Spleen (tissue), 13 donors: ENCODE measurements at regions of chr9 and their contacts with region 1.

Region 1: GRCh38 chr9:134443168-134444037 is 117.1 kb downstream of the RXRA start:
- DNase-seq: peak; percentile 97
- H3K4me3 ChIP-seq: peak overlapping the region in 1 of 8 donors; percentile 22
- H3K27ac ChIP-seq: peak overlapping the region in 6 of 8 donors; percentile 41 to 87 (median 78)
- H3K4me1 ChIP-seq: peaks cover 22 to 51% (median 35%) of the 10 kb centered on the region in 6 donors
- H3K27me3 ChIP-seq: peaks cover 0 to 31% (median 15%) of the 10 kb centered on the region in 7 donors
- CTCF ChIP-seq: peak; percentile 97 to 100 (median 99)
- POLR2A ChIP-seq: no peak

Region 2: DNA sequence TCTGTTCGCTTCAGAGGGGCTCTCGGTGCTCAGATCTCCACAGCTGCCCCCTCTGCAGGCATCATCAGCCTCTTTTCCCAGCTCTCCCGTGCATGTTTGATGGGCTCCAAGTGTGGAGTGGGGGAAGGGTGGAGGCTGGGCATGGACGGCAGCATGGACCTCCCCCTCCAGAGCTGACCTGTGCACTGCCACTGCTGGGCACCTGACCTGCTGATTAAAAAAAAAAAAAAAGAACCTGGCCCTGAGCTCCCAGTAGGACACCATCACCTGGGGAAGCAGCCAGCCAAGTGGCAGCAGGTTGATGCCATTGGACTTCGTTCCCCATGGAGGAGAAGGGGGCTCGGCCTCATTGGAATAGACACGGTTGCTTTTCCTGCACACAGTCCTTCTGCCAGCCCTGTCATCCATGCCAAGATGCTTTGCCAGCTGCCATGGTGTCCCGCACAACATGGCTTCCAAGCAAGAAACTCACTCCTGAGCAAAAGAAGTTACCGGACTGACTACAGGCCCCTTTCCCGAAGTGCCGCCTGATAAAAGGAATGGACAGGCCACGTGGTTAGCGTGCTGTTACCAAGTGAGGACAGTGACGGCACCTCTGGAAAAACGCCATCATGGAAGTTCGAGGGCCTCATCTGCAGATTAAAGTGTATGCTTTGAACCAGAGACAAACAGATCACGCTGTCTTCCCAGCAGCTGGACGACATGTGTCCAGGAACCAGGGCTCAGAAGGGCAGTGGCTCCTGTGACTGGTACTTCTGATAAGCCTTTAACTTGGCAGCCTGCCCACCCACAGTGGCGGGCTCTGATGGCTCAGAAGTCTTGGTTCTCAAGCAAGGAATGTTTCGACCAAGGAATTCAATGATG is 432.9 kb before region 1 on chr9:
- intact Hi-C with region 1: no loop called
- DNase-seq: peak; percentile 39
- H3K4me3 ChIP-seq: no peak overlapping the region
- H3K27ac ChIP-seq: no peak overlapping the region
- H3K4me1 ChIP-seq: no peaks in the 10 kb centered on the region
- H3K27me3 ChIP-seq: peaks cover 0 to 32% (median 0%) of the 10 kb centered on the region in 7 donors
- CTCF ChIP-seq: no peak
- POLR2A ChIP-seq: no peak

Region 3: GRCh38 chr9:134171316-134172197 is 271.8 kb before region 1 on chr9:
- intact Hi-C with region 1: loop called (anchors 2 kb)
- DNase-seq: peak; percentile 65
- H3K4me3 ChIP-seq: no peak overlapping the region
- H3K27ac ChIP-seq: peak overlapping the region in 2 of 8 donors; percentile 57 to 70
- H3K4me1 ChIP-seq: peaks cover 0 to 40% (median 26%) of the 10 kb centered on the region in 6 donors
- H3K27me3 ChIP-seq: peaks cover 0 to 36% (median 0%) of the 10 kb centered on the region in 7 donors
- CTCF ChIP-seq: no peak
- POLR2A ChIP-seq: no peak